Activated CD8-positive, alpha-beta T cell treated with anti-CD3 and anti-CD28 coated beads for 36 hours (primary cell): ENCODE measurements at regions of chr15 and their contacts with region 1.

Region 1: GRCh38 chr15:63288778-63289378 is 11.5 kb downstream of the APH1B start:
- DNase-seq: no peak
- ATAC-seq: peak; percentile 73
- H3K4me3 Mint-ChIP-seq: no peak overlapping the region
- H3K27ac Mint-ChIP-seq: no peak overlapping the region
- H3K4me1 Mint-ChIP-seq: peaks cover 5% of the 10 kb centered on the region
- H3K27me3 Mint-ChIP-seq: no peaks in the 10 kb centered on the region
- CTCF ChIP-seq: peak; percentile 71

Region 2: GRCh38 chr15:63277038-63277892 is 11.6 kb before region 1 on chr15 and contains the start of gene APH1B:
- CTCF ChIA-PET with region 1: interaction called, 10 read pairs
- POLR2A ChIA-PET with region 1: no interaction called
- intact Hi-C with region 1: no loop called
- DNase-seq: peak; percentile 77
- ATAC-seq: peak; percentile 84
- H3K4me3 Mint-ChIP-seq: peak within 1 kb of the TSS; percentile 81
- H3K27ac Mint-ChIP-seq: peak within 1 kb of the TSS; percentile 91
- H3K4me1 Mint-ChIP-seq: peaks cover 33% of the 10 kb centered on the region
- H3K27me3 Mint-ChIP-seq: no peaks in the 10 kb centered on the region
- CTCF ChIP-seq: no peak
- total RNA-seq, gene APH1B: 7.0 to 9.7 TPM

Region 3: GRCh38 chr15:63402498-63403253 is 113.8 kb after region 1 on chr15:
- CTCF ChIA-PET with region 1: interaction called, 49 read pairs
- POLR2A ChIA-PET with region 1: no interaction called
- intact Hi-C with region 1: loop called (anchors 2 kb)
- DNase-seq: no peak
- ATAC-seq: peak; percentile 55
- H3K4me3 Mint-ChIP-seq: no peak overlapping the region
- H3K27ac Mint-ChIP-seq: no peak overlapping the region
- H3K4me1 Mint-ChIP-seq: peaks cover 9% of the 10 kb centered on the region
- H3K27me3 Mint-ChIP-seq: no peaks in the 10 kb centered on the region
- CTCF ChIP-seq: peak; percentile 63

Region 4: DNA sequence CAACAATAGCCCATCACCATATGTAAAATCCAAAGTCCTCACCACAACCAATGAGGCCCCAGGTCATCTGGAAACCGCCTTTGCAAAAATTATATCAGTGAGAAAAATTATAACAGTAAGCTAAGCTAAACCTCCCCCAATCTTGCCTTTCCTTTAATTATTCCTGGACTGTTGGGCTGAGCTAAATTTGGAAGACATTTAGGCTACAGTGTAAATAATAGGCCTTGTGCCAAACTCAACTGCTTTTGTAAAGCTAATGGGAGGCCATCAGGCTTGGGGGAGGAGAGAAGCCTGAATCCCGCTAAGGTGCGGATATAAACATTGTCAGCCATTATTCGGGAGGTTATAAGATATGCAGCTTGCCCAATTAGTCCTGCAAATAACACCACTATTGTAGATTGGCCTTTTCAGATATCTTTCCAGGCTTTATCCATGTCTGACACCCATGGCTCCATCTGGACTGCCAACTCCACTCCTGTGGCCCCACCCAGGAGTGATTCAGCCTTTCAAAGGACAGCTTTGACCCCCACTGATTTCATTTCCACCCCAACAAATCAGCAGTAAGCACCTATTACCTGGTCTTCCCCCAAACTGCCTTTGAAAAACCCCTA is 145.8 kb after region 1 on chr15:
- CTCF ChIA-PET with region 1: interaction called, 11 read pairs
- POLR2A ChIA-PET with region 1: no interaction called
- intact Hi-C with region 1: no loop called
- DNase-seq: no peak
- ATAC-seq: no peak
- H3K4me3 Mint-ChIP-seq: no peak overlapping the region
- H3K27ac Mint-ChIP-seq: no peak overlapping the region
- H3K4me1 Mint-ChIP-seq: peaks cover 9% of the 10 kb centered on the region
- H3K27me3 Mint-ChIP-seq: peaks cover 1% of the 10 kb centered on the region
- CTCF ChIP-seq: no peak